HEK293 (cell line): ENCODE measurements at regions of chr15 and their contacts with region 1.

Region 1: GRCh38 chr15:97759363-97759762 is 201.1 kb upstream of the ARRDC4 start:
- H3K4me3 ChIP-seq: no peak overlapping the region
- H3K27ac ChIP-seq: no peak overlapping the region
- H3K4me1 ChIP-seq: no peaks in the 10 kb centered on the region
- CTCF ChIP-seq: no peak

Region 2: DNA sequence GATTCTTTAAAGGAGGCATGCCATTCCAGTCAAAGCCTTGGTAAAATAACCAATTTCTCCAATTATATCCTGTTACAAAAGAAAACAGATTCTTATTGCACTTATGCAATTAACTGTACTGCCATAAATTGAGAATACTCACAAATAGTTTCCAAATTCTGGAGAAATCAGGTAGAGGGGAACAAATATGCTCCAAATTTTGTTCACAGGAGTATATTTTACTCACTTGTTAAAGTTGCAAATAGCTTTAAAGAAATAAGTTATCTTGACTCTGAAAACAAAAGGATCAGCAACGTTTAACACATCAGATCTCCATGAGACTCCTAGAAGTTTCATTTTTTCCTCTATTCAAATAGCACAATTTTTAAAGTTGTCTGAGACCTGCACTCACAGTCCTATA is 511.0 kb before region 1 on chr15:
- CTCF ChIA-PET with region 1: interaction called, 15 read pairs
- POLR2A ChIA-PET with region 1: no interaction called
- H3K4me3 ChIP-seq: no peak overlapping the region
- H3K27ac ChIP-seq: no peak overlapping the region
- H3K4me1 ChIP-seq: no peaks in the 10 kb centered on the region
- CTCF ChIP-seq: no peak

Region 3: GRCh38 chr15:97319287-97319686 is 440.1 kb before region 1 on chr15:
- CTCF ChIA-PET with region 1: no interaction called
- POLR2A ChIA-PET with region 1: no interaction called
- H3K4me3 ChIP-seq: no peak overlapping the region
- H3K27ac ChIP-seq: no peak overlapping the region
- H3K4me1 ChIP-seq: peaks cover 6% of the 10 kb centered on the region
- CTCF ChIP-seq: no peak

Region 4: GRCh38 chr15:97687654-97688053 is 71.7 kb before region 1 on chr15:
- CTCF ChIA-PET with region 1: no interaction called
- POLR2A ChIA-PET with region 1: no interaction called
- H3K4me3 ChIP-seq: no peak overlapping the region
- H3K27ac ChIP-seq: no peak overlapping the region
- H3K4me1 ChIP-seq: no peaks in the 10 kb centered on the region
- CTCF ChIP-seq: no peak

Region 5: GRCh38 chr15:97728791-97729190 is 30.6 kb before region 1 on chr15:
- CTCF ChIA-PET with region 1: no interaction called
- POLR2A ChIA-PET with region 1: no interaction called
- H3K4me3 ChIP-seq: no peak overlapping the region
- H3K27ac ChIP-seq: no peak overlapping the region
- H3K4me1 ChIP-seq: no peaks in the 10 kb centered on the region
- CTCF ChIP-seq: no peak

Region 6: DNA sequence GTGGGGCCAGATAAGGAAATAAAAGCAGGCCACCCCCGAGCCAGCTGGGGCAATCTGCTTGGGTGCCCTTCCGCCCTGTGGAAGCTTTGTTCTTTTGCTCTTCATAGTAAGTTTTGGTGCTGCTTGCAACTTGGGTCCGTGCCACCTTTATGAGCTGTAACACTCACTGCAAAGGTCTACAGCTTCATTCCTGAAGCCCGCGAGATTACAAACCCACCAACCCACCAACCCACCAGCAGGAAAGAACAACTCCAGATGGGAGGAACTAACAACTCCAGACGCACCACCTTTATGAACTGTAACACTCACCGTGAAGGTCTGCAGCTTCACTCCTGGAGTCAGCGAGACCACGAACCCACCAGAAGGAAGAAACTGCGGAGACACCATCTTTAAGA is 116.9 kb after region 1 on chr15:
- CTCF ChIA-PET with region 1: no interaction called
- POLR2A ChIA-PET with region 1: no interaction called
- H3K4me3 ChIP-seq: no peak overlapping the region
- H3K27ac ChIP-seq: no peak overlapping the region
- H3K4me1 ChIP-seq: no peaks in the 10 kb centered on the region
- CTCF ChIP-seq: no peak